PC-3 (cell line): ENCODE measurements at regions of chr7 and their contacts with region 1.

Region 1: GRCh38 chr7:11706666-11707605 is 125.1 kb downstream of the THSD7A start:
- DNase-seq: peak; percentile 65
- ATAC-seq: peak; percentile 78
- H3K4me3 ChIP-seq: peak overlapping the region; percentile 29; the same call in 1 of the 2 replicates
- H3K27ac ChIP-seq: peak overlapping the region; percentile 23; the same call in 1 of the 2 replicates
- H3K4me1 ChIP-seq: peaks cover 29% of the 10 kb centered on the region
- H3K27me3 ChIP-seq: no peaks in the 10 kb centered on the region
- CTCF ChIP-seq: no peak

Region 2: DNA sequence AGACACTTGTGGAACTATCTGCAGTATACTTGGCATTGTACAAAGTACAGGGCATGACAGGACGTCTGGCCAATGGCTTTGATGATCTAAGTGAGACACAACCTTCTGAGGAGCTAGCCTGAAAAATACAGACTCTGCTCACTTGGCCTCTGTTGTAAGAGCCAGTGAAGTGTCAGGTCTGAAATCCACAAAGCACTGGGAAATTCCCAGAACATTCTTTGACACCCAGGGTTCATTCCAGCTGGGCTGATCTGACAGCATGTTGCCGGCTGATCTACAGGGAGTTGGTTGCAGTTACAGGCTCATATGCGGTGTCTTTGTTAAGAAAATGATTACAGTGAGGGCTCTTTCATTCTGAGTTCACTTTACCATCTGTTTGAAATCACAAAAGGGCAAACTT is 378.6 kb before region 1 on chr7:
- CTCF ChIA-PET with region 1: no interaction called
- POLR2A ChIA-PET with region 1: no interaction called
- intact Hi-C with region 1: no loop called
- DNase-seq: no peak
- ATAC-seq: no peak
- H3K4me3 ChIP-seq: no peak overlapping the region
- H3K27ac ChIP-seq: no peak overlapping the region
- H3K4me1 ChIP-seq: peaks cover 4% of the 10 kb centered on the region; the same call in 1 of the 2 replicates
- H3K27me3 ChIP-seq: no peaks in the 10 kb centered on the region
- CTCF ChIP-seq: no peak

Region 3: GRCh38 chr7:11486271-11486670 is 220.7 kb before region 1 on chr7:
- CTCF ChIA-PET with region 1: no interaction called
- POLR2A ChIA-PET with region 1: no interaction called
- intact Hi-C with region 1: loop called (anchors 10 kb)
- DNase-seq: peak; percentile 23
- ATAC-seq: peak; percentile 27; the same call in 1 of the 2 replicates
- H3K4me3 ChIP-seq: no peak overlapping the region
- H3K27ac ChIP-seq: no peak overlapping the region
- H3K4me1 ChIP-seq: no peaks in the 10 kb centered on the region
- H3K27me3 ChIP-seq: no peaks in the 10 kb centered on the region
- CTCF ChIP-seq: peak; percentile 47; the same call in 1 of the 2 replicates

Region 4: GRCh38 chr7:11584406-11585031 is 122.4 kb before region 1 on chr7:
- CTCF ChIA-PET with region 1: no interaction called
- POLR2A ChIA-PET with region 1: no interaction called
- intact Hi-C with region 1: no loop called
- DNase-seq: no peak
- ATAC-seq: no peak
- H3K4me3 ChIP-seq: no peak overlapping the region
- H3K27ac ChIP-seq: no peak overlapping the region
- H3K4me1 ChIP-seq: no peaks in the 10 kb centered on the region
- H3K27me3 ChIP-seq: no peaks in the 10 kb centered on the region
- CTCF ChIP-seq: no peak